HepG2 (cell line): ENCODE measurements at regions of chr14 and their contacts with region 1.

Region 1: DNA sequence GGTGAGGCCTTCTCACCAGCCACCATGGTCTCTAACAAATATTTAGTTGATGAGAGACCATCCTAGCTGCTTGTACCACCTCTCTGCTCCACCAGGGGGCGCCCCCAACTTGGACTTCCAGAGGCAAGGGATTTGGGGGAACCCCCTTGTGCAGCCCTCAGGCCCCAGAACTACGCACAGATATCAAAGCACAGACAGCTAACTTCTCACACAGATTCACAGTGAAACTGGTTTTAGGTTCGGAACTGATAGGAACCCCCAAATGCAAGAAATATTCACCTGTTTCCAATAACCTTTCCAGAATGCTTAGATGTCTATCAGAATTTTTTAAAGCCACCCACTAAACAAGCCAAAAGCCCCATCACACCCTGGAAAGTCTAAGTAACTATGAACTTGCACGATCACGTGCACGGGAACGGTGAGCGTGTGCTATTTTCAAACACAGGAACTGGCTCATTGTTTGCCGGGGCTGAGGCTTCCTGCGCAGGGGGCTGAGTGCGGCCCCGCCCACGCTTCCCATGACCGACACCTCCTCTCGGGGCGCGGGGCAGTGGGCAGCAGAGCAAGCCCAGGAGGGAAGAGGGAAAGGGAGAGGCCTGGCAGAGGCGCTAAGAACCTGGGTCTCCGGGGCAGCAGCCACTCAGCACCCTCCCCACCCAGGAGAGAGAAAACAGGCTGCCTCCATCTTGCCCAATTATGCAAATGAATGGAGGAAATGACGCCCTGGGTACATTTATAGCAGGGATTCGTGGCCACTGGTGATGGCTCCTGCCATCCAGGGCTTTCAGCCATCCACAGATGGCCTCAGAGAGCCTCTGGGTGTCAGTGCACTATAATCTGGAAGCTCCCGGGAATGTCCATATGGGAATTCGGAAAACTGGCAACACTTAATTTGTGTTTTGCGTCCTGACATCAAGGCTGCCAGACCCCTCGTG is 79.4 kb upstream of the GPR68 start:
- DNase-seq: peak; percentile 45
- ATAC-seq: peak; percentile 71
- H3K4me3 ChIP-seq: no peak overlapping the region
- H3K27ac ChIP-seq: no peak overlapping the region
- H3K4me1 ChIP-seq: no peaks in the 10 kb centered on the region
- H3K27me3 ChIP-seq: no peaks in the 10 kb centered on the region
- CTCF ChIP-seq: peak; percentile 91
- EP300 ChIP-seq: no peak
- POLR2A ChIP-seq: no peak
- RAD21 ChIP-seq: peak; percentile 70

Region 2: GRCh38 chr14:91424813-91425530 is 101.0 kb after region 1 on chr14:
- CTCF ChIA-PET with region 1: interaction called, 39 read pairs
- POLR2A ChIA-PET with region 1: no interaction called
- in situ Hi-C with region 1: loop called (anchors 5 kb)
- intact Hi-C with region 1: no loop called
- DNase-seq: no peak
- ATAC-seq: peak; percentile 40; the same call in 2 of the 3 replicates
- H3K4me3 ChIP-seq: no peak overlapping the region
- H3K27ac ChIP-seq: no peak overlapping the region
- H3K4me1 ChIP-seq: peaks cover 45% of the 10 kb centered on the region
- H3K27me3 ChIP-seq: peaks cover 0 to 3% of the 10 kb centered on the region in 2 experiments; a peak in 1 of 5 replicates
- CTCF ChIP-seq: no peak
- EP300 ChIP-seq: no peak
- POLR2A ChIP-seq: no peak
- RAD21 ChIP-seq: no peak